Activated naive CD4-positive, alpha-beta T cell treated with anti-CD3 and anti-CD28 coated beads for 36 hours (primary cell): ENCODE measurements at regions of chr14 and their contacts with region 1.

Region 1: GRCh38 chr14:73105050-73105449 is 31.3 kb upstream of the PSEN1 start:
- DNase-seq: no peak
- H3K4me3 Mint-ChIP-seq: no peak overlapping the region
- H3K27ac Mint-ChIP-seq: no peak overlapping the region
- H3K4me1 Mint-ChIP-seq: no peaks in the 10 kb centered on the region
- H3K27me3 Mint-ChIP-seq: no peaks in the 10 kb centered on the region

Region 2: DNA sequence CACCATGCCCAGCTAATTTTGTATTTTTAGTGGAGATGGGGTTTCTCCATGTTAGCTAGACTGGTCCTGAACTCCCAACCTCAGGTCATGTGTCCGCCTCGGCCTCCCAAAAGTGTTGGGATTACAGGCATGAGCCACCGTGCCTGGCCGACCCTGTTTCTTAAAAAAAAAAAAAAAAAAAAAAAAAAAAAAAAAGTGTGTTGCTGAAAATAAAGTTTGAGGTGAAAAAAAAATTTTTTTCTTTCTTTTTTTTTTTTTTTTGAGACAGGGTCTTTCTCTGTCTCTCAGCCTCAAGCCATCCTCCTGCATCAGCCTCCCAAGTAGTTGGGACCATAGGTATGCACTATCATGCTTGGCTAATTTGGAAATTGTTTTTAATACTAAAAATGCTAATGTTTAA is 35.5 kb before region 1 on chr14:
- CTCF ChIA-PET with region 1: no interaction called
- intact Hi-C with region 1: loop called (anchors 5 kb)
- DNase-seq: no peak
- H3K4me3 Mint-ChIP-seq: no peak overlapping the region
- H3K27ac Mint-ChIP-seq: no peak overlapping the region
- H3K4me1 Mint-ChIP-seq: peaks cover 31% of the 10 kb centered on the region
- H3K27me3 Mint-ChIP-seq: no peaks in the 10 kb centered on the region